GM12878 (cell line): ENCODE measurements at regions of chr12 and their contacts with region 1.

Region 1: DNA sequence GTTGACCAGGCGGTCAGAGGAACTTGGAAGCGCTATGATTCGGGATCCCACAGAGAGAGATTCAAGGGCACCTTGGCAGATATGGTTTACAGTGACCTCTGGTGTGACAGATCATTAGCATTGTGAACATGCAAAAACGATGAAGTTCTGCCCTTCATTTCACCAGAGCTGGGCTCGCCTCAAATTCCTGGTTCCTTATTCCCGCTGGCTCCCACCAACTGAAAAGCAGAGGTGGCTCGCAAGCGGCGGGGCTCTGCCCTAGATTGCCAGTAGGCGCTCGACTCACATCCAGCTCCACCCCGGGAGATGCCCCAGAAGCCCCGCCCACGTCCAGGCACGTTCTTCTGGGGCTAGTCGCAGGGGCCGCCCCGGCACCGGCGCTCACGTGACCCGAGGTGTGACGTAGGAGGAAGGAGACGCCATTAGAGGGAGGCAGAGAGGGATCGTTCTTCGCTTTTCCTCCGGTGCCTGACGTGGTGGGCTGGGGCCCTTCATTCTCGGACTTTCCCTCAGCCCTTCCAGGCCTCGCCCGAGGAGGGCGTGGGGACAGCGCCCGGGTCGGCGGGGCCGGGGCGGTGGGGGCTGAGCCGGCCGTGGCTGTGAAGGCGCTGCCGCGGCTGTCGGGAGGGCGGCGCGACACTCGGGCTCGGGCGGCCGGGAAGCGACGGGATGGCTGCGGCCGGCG is at the start of gene RAB21:
- DNase-seq: peak; percentile 70
- ATAC-seq: peak; percentile 92
- H3K4me3 ChIP-seq: peak within 1 kb of the TSS; percentile 96
- H3K27ac ChIP-seq: peak within 1 kb of the TSS; percentile 94
- H3K4me1 ChIP-seq: peaks cover 4% of the 10 kb centered on the region
- H3K27me3 ChIP-seq: no peaks in the 10 kb centered on the region; a peak in 1 of 4 replicates
- CTCF ChIP-seq: 0 out of 6 replicates have a peak, but pooled peaks of 1 of the 3 experiments have one; percentile 12
- EP300 ChIP-seq: no peak
- POLR2A ChIP-seq: peak; percentile 93
- RAD21 ChIP-seq: 0 out of 2 replicates have a peak, but pooled peaks have one; percentile 1
- polyA plus RNA-seq, gene RAB21: 5.3 to 8.2 TPM

Region 2: DNA sequence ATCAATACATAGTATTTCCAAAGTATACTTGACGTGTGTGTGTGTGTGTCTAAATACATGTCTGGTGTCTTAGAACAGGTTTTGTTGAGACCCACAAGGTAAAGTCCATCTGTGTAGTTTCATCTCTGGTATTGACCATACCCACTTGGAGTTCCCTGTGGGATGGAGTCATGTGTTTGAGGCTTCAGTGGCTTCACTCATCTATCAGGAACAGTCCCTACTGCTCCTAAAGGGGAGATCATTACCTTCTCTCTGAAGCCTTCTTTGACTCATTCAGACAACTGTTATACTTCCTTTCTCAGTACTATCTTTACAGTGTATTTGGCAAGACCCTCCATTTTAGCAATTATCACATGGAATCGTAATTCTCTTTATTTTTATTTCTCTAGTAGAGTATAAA is 14.3 kb after region 1 on chr12:
- CTCF ChIA-PET with region 1: interaction called, 5 read pairs
- POLR2A ChIA-PET with region 1: interaction called, 7 read pairs
- RAD21 ChIA-PET with region 1: interaction called, 7 read pairs
- SMC1A ChIA-PET with region 1: interaction called, 11 read pairs
- in situ Hi-C with region 1: no loop called
- intact Hi-C with region 1: no loop called
- DNase-seq: no peak
- ATAC-seq: peak; percentile 64
- H3K4me3 ChIP-seq: no peak overlapping the region
- H3K27ac ChIP-seq: no peak overlapping the region
- H3K4me1 ChIP-seq: no peaks in the 10 kb centered on the region
- H3K27me3 ChIP-seq: no peaks in the 10 kb centered on the region
- CTCF ChIP-seq: no peak
- EP300 ChIP-seq: no peak
- POLR2A ChIP-seq: no peak
- RAD21 ChIP-seq: no peak